ENCODE measurements at regions of chr11 and their contacts with region 1.

Region 1: GRCh38 chr11:75142714-75143419 is 8.0 kb upstream of the SLCO2B1 start:
- DNase-seq: peak; percentile 47 to 93 (median 78)

Region 2: DNA sequence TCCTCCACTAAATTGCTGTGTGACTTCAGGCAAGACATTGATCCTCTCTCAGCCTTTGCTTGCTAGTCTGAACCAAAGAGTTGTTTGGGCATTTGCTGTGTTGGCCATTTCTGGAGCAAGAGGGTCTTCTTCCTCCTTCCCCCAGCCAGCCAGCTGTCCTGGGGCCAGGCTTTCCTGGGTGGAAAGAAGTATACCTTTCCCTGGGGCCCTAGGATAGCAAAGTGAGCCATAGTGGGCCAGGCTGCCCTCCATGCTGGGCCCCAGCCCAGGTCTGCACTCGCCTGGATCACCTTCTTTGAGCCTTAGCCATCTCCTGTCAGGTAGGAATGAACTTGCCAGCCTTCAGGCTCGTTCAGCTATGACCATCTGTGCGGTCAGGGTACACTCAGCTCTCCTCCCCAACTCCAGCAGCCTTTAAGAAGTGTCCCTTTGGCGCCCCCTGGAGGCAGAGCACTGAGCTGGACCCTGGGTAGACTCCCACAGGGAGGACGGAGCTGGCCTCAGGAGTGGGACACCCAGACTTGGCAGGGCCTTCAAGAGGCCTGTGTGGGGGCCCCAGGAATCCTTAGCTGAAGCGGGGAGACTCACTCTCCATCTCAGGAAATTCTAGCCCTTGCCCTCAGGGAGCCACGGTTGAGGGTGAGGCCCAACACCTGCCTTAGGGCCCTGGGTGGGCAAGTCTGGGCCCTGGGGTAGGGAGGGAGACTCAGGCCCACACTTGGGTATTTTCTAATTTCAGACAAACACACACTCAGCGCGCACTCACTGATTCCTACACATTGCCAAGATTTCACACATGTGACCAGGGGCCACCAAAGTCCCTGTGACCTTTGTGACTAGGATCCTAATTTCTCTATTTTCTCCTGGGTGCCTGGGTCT is 62.1 kb after region 1 on chr11:
- intact Hi-C with region 1: loop called (anchors 2 kb)
- DNase-seq: peak; percentile 68 to 90 (median 81)

Measured in head of caudate nucleus (tissue), 42 donors.